Ascending aorta (tissue), 2 donors: ENCODE measurements at regions of chr11 and their contacts with region 1.

Region 1: GRCh38 chr11:118928108-118928870 is 2.6 kb upstream of the BCL9L start:
- DNase-seq: peak; percentile 93 to 97
- H3K4me3 ChIP-seq: peak overlapping the region; percentile 80 to 82
- H3K27ac ChIP-seq: peak overlapping the region; percentile 97 to 98
- H3K4me1 ChIP-seq: peaks cover 3 to 16% of the 10 kb centered on the region in 2 donors
- H3K27me3 ChIP-seq: no peaks in the 10 kb centered on the region
- CTCF ChIP-seq: peak; percentile 92 to 97 (median 94)

Region 2: DNA sequence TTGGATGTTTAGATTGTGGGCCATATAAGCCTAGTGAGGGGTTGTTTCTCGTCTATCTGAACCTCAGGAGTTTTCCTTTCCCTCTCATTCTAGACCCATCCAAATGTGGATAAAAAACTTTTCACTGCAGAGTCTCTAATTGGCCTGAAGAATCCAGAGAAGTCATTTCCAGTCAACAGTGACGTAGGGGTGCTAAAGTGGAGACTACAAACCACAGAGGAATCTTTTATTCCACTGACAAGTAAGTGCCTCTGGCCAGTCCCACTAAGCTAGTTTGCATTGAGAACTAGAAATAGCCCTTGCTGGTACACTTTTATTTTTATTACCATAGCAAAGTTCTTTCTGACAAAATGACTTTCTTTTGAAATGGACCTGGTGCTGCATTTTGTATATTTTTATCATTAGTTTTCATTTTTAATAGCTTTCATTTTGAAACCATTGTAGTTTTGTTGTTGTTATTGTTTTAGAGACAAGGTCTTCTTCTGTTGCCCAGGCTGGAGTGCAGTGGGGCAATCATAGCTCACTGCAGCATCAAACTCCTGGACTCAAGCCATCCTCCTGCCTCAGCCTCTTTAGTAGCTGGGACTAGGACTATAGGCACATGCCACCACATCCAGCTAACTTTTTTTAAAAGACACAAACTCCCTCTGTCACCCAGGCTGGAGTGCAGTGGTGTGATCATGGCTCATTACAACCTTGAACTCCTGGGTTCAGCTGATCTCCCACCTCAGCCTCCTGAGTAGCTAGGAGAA is 335.5 kb before region 1 on chr11:
- intact Hi-C with region 1: no loop called
- DNase-seq: peak in 1 of 2 donors; percentile 76
- H3K4me3 ChIP-seq: no peak overlapping the region
- H3K27ac ChIP-seq: peak overlapping the region; percentile 88 to 90
- H3K4me1 ChIP-seq: peaks cover 6 to 27% of the 10 kb centered on the region in 2 donors
- H3K27me3 ChIP-seq: no peaks in the 10 kb centered on the region
- CTCF ChIP-seq: no peak

Region 3: GRCh38 chr11:118689851-118690552 is 238.3 kb before region 1 on chr11:
- intact Hi-C with region 1: loop called (anchors 1 kb)
- DNase-seq: peak; percentile 76 to 90
- H3K4me3 ChIP-seq: peak overlapping the region; percentile 44 to 50
- H3K27ac ChIP-seq: peak overlapping the region; percentile 67 to 72
- H3K4me1 ChIP-seq: peaks cover 3 to 7% of the 10 kb centered on the region in 2 donors
- H3K27me3 ChIP-seq: no peaks in the 10 kb centered on the region
- CTCF ChIP-seq: peak; percentile 76 to 89 (median 86)

Region 4: DNA sequence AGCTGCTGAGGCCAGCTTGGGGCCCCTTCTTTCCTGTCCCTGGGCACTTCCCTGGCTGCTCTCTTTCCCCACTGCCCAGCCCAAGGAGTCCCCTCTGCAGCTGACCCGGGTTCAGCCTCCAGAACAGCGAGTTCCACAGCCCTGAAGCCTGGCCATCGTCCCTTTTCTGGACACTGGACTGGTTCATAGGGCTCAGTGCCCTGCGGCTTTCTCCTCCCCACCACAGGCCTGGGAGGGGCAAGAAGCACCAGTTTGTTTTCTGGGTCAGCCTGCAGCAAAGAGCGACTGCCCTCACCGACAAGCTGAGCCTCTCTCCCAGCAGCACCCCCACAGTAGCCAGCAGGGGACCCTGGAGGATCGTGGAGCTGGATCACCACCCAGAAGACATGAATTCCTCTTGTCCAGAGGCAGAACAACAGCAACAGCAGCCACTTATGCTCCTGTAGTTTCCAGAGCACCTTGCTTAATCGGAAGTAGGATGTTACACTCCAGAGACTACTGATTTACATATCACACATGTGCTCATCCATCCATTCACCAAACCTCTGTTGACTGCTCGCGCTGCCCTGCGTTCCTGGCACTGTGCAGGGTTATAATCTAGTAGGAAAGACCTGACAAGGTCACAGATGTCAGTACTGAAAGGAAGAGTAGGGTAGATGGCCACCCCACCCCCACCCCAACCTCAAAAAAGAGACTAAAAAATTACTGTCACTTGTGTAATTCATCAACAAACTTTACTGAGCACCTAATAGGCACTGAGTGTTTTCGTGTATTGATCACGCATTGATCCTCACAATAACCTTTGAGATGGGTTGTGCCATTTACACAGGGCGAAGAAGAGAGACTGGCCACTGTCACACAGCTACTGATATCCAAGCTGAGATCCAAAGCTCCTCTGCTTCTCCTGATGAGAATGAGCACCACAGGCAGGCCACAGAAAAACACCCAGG is 57.6 kb before region 1 on chr11:
- intact Hi-C with region 1: loop called (anchors 1 kb)
- DNase-seq: peak in 1 of 2 donors; percentile 89
- H3K4me3 ChIP-seq: peak overlapping the region; percentile 28 to 42
- H3K27ac ChIP-seq: peak overlapping the region; percentile 90
- H3K4me1 ChIP-seq: peaks cover 5 to 15% of the 10 kb centered on the region in 2 donors
- H3K27me3 ChIP-seq: no peaks in the 10 kb centered on the region
- CTCF ChIP-seq: peak in 1 of 3 experiments; percentile 29

Region 5: DNA sequence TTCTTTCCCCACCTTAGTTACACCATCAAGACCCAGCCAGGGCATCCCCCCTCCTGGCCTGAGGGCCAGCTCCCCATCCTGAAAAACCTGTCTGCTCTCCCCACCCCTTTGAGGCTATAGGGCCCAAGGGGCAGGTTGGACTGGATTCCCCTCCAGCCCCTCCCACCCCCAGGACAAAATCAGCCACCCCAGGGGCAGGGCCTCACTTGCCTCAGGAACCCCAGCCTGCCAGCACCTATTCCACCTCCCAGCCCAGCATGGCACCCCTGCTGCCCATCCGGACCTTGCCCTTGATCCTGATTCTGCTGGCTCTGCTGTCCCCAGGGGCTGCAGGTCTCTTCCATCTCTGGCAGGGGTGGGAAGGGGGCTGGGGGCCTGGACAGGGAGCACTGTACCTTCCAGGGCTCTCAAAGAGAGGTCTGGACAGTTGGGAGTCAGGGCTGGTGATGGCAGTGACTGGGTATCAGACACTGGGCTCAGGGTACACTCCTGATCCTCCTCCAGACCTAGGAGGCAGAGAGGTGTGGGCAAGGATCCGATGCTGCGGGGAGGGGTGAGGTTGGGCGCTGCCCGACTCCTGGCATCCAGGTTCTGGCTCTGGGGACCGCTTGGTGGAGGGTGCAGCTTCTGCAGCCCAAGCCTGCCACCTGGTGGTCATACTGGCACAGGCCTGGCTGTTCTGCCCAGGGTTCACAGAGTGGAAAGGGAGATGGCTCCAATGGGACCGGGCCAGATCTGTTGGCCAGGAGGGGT is 28.0 kb after region 1 on chr11 and contains the start of gene UPK2:
- intact Hi-C with region 1: loop called (anchors 1 kb)
- DNase-seq: peak; percentile 49 to 93
- H3K4me3 ChIP-seq: no peak within 1 kb of the TSS
- H3K27ac ChIP-seq: no peak within 1 kb of the TSS
- H3K4me1 ChIP-seq: no peaks in the 10 kb centered on the region
- H3K27me3 ChIP-seq: no peaks in the 10 kb centered on the region
- CTCF ChIP-seq: peak; percentile 91 to 98 (median 91)
- total RNA-seq, gene UPK2: not detected